Activated T-helper 1 cell treated with anti-CD3 and anti-CD28 coated beads, Interleukin-12 subunit alpha, Interleukin-12 subunit beta, Interleukin-2, Interleukin-4 antibody, amounts not matched to agents 30 ng/mL and 10 ng/mL and 1 ng/mL, durations not matched to agents 14 hours and 24 hours and 36 hours (primary cell): ENCODE measurements at regions of chr2 and their contacts with region 1.

Region 1: DNA sequence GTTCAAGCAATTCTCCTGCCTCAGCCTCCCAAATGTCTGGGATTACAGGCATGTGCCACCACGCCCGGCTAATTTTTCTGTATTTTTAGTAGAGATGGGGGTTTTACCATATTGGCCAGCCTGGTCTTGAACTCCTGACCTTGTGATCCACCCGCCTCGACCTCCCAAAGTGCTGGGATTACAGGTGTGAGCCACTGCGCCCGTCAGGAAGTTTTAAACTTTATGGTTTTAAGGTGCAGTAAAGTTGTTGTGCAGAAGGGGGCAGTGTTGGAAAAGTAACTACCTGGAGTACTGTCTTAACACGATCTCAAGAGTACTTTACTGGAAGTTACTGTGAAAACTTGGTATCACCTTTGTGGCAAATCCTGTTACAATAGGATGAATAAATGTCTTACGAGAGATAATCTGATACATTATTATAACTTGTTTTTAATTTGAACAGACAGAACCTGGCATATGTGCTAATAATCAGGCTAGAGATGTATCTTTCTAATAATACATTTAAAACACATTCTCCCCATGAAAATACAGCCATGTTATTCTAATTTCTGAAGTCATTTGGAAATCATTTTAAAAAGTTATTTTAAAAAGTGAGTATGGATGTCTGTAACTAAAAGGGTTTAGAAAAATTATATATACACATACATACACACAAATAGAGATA is 10.8 kb downstream of the SPDYA start:
- DNase-seq: peak; percentile 52
- H3K4me3 Mint-ChIP-seq: no peak overlapping the region
- H3K27ac Mint-ChIP-seq: no peak overlapping the region
- H3K4me1 Mint-ChIP-seq: no peaks in the 10 kb centered on the region
- H3K27me3 Mint-ChIP-seq: peaks cover 2% of the 10 kb centered on the region

Region 2: GRCh38 chr2:28681158-28681571 is 140.3 kb before region 1 on chr2:
- intact Hi-C with region 1: loop called (anchors 5 kb)
- DNase-seq: peak; percentile 67
- H3K4me3 Mint-ChIP-seq: peak overlapping the region; percentile 73
- H3K27ac Mint-ChIP-seq: peak overlapping the region; percentile 90
- H3K4me1 Mint-ChIP-seq: peaks cover 80% of the 10 kb centered on the region
- H3K27me3 Mint-ChIP-seq: no peaks in the 10 kb centered on the region

Region 3: GRCh38 chr2:28894470-28895177 is 73.2 kb after region 1 on chr2 and contains the start of gene WDR43:
- intact Hi-C with region 1: loop called (anchors 2 kb)
- DNase-seq: peak; percentile 99
- H3K4me3 Mint-ChIP-seq: peak within 1 kb of the TSS; percentile 100
- H3K27ac Mint-ChIP-seq: peak within 1 kb of the TSS; percentile 96
- H3K4me1 Mint-ChIP-seq: peaks cover 40% of the 10 kb centered on the region
- H3K27me3 Mint-ChIP-seq: no peaks in the 10 kb centered on the region
- total RNA-seq, gene WDR43: 188 and 190 TPM in 2 replicates

Region 4: GRCh38 chr2:28958689-28959088 is 137.3 kb after region 1 on chr2:
- intact Hi-C with region 1: loop called (anchors 5 kb)
- DNase-seq: peak; percentile 11
- H3K4me3 Mint-ChIP-seq: no peak overlapping the region
- H3K27ac Mint-ChIP-seq: no peak overlapping the region
- H3K4me1 Mint-ChIP-seq: no peaks in the 10 kb centered on the region
- H3K27me3 Mint-ChIP-seq: peaks cover 14% of the 10 kb centered on the region

Region 5: DNA sequence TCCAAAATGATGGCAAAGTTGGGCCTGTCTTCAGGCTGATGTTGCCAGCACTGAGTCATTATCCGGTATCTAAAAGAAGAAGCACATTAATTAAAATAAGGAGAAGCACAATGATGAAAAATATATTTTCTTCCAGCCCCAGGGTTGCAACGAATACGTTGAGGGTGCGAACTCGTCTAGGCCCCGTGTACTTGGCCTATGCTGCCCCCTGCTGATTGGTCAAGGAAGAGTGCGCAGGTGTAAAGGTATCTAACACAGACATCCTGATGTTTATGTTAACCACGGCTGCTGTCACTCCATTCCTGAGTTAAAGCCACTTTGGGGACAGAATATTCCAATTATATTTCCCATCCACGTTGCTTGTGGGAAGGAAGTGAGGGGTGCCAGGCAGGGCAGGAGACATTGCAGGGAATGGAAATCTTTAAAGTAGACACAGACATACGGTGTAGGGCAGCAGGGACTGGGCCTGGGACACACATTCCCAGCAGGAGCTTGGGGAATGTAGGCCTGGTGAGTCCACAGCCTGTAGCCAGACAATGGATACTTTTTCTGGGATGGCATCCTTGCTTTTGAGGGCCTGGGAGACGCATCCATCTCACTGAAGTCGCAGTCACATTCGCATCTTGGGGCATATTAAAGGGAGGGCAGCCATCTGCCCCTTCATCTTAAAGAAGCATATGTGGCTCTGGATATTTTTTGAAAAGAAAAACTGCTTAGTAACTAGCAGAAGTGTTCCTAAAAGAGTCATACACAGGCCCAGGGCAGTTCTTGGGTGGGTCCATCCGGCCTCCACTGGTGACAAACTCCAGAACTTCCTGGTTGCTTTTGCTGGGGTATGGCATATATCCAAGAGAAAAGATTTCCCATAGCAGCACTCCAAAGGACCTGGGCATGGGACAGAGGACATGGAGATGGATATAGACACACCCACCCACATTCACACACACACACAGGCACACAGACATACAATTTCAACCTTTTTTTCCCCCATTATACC is 375.7 kb after region 1 on chr2:
- intact Hi-C with region 1: loop called (anchors 1 kb)
- DNase-seq: peak; percentile 67
- H3K4me3 Mint-ChIP-seq: no peak overlapping the region
- H3K27ac Mint-ChIP-seq: no peak overlapping the region
- H3K4me1 Mint-ChIP-seq: no peaks in the 10 kb centered on the region
- H3K27me3 Mint-ChIP-seq: peaks cover 2% of the 10 kb centered on the region

Region 6: GRCh38 chr2:29326926-29327325 is 505.5 kb after region 1 on chr2:
- intact Hi-C with region 1: no loop called
- DNase-seq: no peak
- H3K4me3 Mint-ChIP-seq: no peak overlapping the region
- H3K27ac Mint-ChIP-seq: no peak overlapping the region
- H3K4me1 Mint-ChIP-seq: peaks cover 37% of the 10 kb centered on the region
- H3K27me3 Mint-ChIP-seq: peaks cover 12% of the 10 kb centered on the region